Activated CD8-positive, alpha-beta T cell treated with anti-CD3 and anti-CD28 coated beads, Interleukin-2, amount 10 ng/mL, durations not matched to agents 7 days and 5 days (primary cell): ENCODE measurements at regions of chr6 and their contacts with region 1.

Region 1: GRCh38 chr6:110815217-110816109 is at the start of gene CDK19:
- DNase-seq: peak; percentile 99
- ATAC-seq: peak; percentile 84
- H3K4me3 Mint-ChIP-seq: peak within 1 kb of the TSS; percentile 98
- H3K27ac Mint-ChIP-seq: peak within 1 kb of the TSS; percentile 98
- H3K4me1 Mint-ChIP-seq: peaks cover 37% of the 10 kb centered on the region
- H3K27me3 Mint-ChIP-seq: no peaks in the 10 kb centered on the region
- total RNA-seq, gene CDK19: 21.6 to 26.2 TPM

Region 2: DNA sequence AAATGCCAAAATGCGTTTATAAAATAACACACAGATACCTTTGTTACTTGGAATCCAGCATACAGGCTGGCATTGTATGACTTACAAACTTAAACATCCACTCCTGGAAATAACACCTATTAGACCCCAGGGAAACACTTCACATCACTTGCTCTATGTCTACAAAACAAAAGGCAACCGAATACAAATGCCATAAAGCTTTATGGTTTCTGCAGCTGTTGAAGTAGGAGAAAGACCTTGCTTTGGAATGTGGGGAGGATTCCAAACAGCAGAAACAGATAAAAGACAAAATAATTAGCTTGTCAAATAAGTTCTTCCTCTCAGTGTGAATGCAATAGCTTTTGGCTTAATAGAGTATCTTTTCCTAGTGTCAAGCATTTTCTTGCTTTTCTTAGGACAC is 49.4 kb after region 1 on chr6:
- CTCF ChIA-PET with region 1: no interaction called
- POLR2A ChIA-PET with region 1: interaction called, 22 read pairs
- DNase-seq: no peak
- ATAC-seq: no peak
- H3K4me3 Mint-ChIP-seq: no peak overlapping the region
- H3K27ac Mint-ChIP-seq: no peak overlapping the region
- H3K4me1 Mint-ChIP-seq: peaks cover 14% of the 10 kb centered on the region
- H3K27me3 Mint-ChIP-seq: no peaks in the 10 kb centered on the region

Region 3: GRCh38 chr6:110882271-110882613 is 66.8 kb after region 1 on chr6:
- CTCF ChIA-PET with region 1: interaction called, 82 read pairs
- POLR2A ChIA-PET with region 1: interaction called, 441 read pairs
- DNase-seq: no peak
- ATAC-seq: no peak
- H3K4me3 Mint-ChIP-seq: no peak overlapping the region
- H3K27ac Mint-ChIP-seq: no peak overlapping the region
- H3K4me1 Mint-ChIP-seq: peaks cover 84% of the 10 kb centered on the region
- H3K27me3 Mint-ChIP-seq: no peaks in the 10 kb centered on the region

Region 4: GRCh38 chr6:110944681-110945151 is 129.3 kb after region 1 on chr6:
- CTCF ChIA-PET with region 1: interaction called, 3 read pairs
- POLR2A ChIA-PET with region 1: interaction called, 20 read pairs
- DNase-seq: peak; percentile 52
- ATAC-seq: peak; percentile 96
- H3K4me3 Mint-ChIP-seq: no peak overlapping the region
- H3K27ac Mint-ChIP-seq: peak overlapping the region; percentile 66
- H3K4me1 Mint-ChIP-seq: peaks cover 6% of the 10 kb centered on the region
- H3K27me3 Mint-ChIP-seq: no peaks in the 10 kb centered on the region

Region 5: GRCh38 chr6:110958329-110959192 is 143.1 kb after region 1 on chr6 and contains the start of gene GTF3C6:
- CTCF ChIA-PET with region 1: interaction called, 5 read pairs
- POLR2A ChIA-PET with region 1: interaction called, 28 read pairs
- DNase-seq: peak; percentile 96
- ATAC-seq: peak; percentile 99
- H3K4me3 Mint-ChIP-seq: peak within 1 kb of the TSS; percentile 98
- H3K27ac Mint-ChIP-seq: peak within 1 kb of the TSS; percentile 100
- H3K4me1 Mint-ChIP-seq: peaks cover 18% of the 10 kb centered on the region
- H3K27me3 Mint-ChIP-seq: no peaks in the 10 kb centered on the region
- total RNA-seq, gene GTF3C6: 93.9 to 99.8 TPM